Cardiac septum (tissue), 1 donor: ENCODE measurements at regions of chr17 and their contacts with region 1.

Region 1: GRCh38 chr17:2054512-2055291 is at the start of gene HIC1:
- DNase-seq: peak; percentile 93
- total RNA-seq, gene HIC1: 15.0 TPM

Region 2: DNA sequence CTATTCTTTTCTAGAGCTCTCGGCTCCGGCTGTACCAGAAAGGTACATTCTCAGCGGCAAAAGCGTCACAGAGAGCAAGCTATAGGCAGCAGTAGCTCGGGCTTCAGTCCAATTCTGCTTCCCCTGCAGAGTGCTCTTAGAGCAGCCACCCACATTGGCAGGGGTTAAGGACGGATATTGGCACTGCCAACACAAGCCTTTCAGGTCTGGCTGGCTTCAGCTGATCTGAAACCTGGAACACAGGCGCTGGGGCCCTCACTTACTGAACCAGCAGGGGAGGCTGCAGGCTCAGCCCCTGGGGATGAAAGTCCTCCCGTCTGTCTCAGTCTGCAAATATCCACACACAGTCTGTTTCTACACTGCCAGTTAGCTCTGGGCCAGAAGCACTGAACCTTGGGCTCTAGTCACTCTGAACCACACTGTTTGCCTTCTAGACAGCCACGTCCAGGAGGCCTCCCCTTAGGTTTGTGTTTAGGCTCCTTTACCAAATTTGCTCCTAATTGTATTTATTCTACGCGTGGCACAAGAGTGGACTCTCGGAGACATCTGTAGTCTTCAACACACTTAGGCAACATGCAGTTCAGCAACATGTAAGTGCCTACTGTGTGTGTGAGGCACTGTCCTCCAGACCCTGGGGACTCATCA is 40.3 kb after region 1 on chr17:
- intact Hi-C with region 1: loop called (anchors 5 kb)
- DNase-seq: peak; percentile 82

Region 3: DNA sequence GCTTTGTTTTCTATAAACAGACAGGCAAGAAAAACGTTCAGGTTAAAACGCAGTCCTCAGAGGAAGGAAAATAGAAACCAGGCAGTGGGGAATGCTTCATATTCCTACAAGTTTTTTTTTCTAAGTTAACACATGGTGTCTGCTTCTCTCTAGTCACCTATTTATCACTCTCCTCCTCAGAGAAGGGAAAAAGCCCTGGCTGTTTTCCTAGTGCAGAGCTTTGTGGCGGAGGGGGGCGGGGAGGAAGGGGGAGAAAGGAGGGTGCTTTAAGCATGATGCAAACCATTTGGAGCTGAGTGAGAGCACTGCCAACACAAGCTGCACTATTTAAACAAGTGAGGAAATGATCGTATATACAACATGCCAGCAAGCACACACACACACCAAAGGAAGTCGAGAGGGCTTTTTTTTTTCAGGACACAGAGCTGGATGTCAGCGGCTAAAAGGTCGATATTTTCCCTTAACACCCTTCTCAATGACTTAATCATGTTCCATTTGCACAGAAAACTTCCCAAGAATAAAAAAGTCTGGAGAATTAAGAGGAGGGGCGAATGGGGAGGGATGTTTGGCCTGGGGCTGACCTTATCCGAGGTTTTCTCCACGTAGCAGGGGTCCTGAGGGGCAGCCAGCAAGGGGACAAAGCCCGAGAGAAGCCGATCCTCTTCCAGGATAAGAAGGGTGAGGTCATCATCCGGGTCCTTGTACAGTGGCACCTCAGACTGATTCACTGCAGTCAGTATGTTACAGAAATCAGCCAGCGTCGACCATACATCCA is 117.6 kb after region 1 on chr17:
- intact Hi-C with region 1: loop called (anchors 2 kb)
- DNase-seq: peak; percentile 84

Region 4: DNA sequence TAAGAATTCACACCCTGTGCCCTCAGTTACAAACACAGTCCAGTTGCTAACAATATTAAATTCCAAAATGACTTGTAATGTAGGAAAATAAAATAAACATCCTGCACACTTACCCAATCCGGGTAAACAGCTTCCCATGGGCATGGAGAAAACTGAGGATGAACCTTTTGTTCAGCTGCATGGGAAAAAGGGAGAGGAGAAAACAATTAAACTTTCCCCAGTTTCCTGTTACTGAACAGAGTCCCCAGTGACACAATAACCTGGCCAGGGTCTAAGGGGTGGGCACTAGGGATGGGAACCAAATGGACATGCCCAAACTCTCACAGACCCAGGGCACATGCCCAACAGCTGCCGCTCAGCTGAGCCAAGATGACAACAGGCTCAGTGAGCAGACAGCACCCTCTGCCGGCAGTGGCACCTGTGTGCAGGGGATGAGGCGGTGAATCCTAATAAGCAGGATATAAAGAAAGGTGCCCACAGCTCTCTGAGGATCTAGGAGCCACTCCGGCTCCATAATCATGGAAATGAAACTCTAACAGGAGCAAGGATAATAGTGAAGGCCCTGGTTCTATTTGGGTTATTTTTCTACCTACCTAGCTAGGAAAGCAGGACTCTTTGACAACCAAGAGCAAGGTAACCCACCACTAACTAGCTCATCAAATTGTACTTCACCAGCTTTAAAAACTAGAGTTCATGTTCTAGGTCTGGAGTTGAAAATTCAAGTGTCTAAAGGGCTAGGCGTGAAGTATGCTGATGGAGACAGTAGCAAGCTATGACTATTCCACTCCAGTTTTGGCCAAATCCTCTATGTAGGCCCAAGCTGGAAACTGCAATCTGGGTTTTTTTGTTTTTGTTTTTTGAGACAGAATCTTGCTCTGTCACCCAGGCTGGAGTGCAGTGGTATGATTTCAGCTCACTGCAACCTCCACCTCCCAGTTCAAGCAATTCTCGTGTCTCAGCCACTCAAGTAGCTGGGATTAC is 190.1 kb after region 1 on chr17:
- intact Hi-C with region 1: loop called (anchors 1 kb)
- DNase-seq: peak; percentile 91

Region 5: DNA sequence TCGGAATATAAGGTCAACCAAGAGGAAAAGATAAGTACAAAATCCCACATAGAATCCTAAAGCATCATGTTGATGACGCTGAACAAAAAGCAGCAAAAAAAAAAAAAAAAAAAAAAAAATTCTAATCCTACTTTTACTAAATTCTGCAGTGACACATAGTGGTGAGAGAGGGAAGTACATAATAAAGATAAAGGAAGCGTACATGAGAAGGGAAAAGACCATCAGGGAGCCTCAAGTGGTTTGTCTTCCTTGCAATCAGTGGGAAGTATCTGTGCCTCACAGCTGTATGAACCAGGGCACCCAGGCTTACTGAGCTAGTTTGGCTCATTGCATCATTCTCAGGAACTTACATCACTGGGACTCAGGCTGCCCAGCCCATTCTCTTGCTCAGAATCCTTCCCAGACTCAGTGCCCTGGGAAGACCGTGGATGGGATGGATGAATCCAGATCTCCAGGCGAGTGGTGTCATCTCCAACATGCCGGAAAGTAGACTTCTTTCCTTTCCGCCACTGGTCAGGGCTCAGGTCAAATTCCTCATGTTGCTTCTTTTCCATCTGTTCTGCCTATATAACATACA is 227.7 kb after region 1 on chr17:
- intact Hi-C with region 1: loop called (anchors 2 kb)
- DNase-seq: no peak